ENCODE measurements at regions of chr14 and their contacts with region 1.

Region 1: DNA sequence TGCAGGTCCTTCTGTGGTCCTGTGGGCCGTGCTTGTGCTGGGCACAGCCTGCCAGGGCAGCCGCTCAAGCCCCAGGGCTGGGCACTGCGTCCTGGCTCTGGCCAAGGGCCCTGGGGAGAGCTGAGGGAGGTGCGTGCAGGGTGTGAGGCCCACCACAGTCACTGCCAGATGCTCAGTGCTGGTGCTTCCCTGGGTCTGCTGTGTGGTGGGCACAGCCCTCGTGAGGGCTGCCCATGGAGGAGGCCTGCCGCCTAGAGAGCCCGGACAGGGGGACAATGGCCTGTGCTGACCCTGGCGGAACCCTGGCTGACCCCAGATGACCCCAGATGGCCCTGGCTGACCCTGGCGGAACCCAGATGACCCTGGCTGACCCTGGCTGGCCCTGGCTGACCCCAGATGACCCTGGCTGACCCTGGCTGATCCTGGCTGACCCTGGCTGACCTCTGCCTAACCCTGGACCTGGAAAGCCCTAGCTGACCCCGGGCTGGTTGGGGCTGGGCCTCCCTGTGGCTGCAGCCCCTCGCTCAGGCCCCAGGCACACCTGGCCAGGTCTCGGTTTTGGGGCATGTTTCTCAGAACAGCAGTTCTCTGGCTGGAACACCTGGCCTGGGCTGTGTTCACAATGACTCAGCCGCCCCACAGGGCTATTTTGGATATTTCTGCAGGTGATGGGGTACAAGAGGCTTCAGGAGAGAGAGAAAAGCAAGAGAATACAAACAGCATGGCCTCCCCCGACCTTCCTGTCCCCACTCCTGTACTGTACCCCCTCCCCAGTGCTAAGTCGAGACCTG is 55.4 kb downstream of the TMEM121 start:
- DNase-seq: peak in 1 of 5 donors; percentile 21
- ATAC-seq: no peak
- H3K4me3 ChIP-seq: no peak overlapping the region
- H3K27ac ChIP-seq: no peak overlapping the region
- H3K4me1 ChIP-seq: no peaks in the 10 kb centered on the region
- H3K27me3 ChIP-seq: no peaks in the 10 kb centered on the region
- CTCF ChIP-seq: no peak
- POLR2A ChIP-seq: no peak

Region 2: GRCh38 chr14:105700622-105701288 is 119.0 kb after region 1 on chr14:
- intact Hi-C with region 1: loop called in 4 of 10 experiments (anchors 2 to 5 kb)
- DNase-seq: peak in 1 of 5 donors; percentile 6
- ATAC-seq: no peak
- H3K4me3 ChIP-seq: no peak overlapping the region
- H3K27ac ChIP-seq: no peak overlapping the region
- H3K4me1 ChIP-seq: no peaks in the 10 kb centered on the region
- H3K27me3 ChIP-seq: no peaks in the 10 kb centered on the region
- CTCF ChIP-seq: no peak
- POLR2A ChIP-seq: no peak

Region 3: GRCh38 chr14:106318700-106319099 is 737.0 kb after region 1 on chr14:
- intact Hi-C with region 1: no loop called
- DNase-seq: no peak
- ATAC-seq: no peak
- H3K4me3 ChIP-seq: no peak overlapping the region
- H3K27ac ChIP-seq: no peak overlapping the region
- H3K4me1 ChIP-seq: no peaks in the 10 kb centered on the region
- H3K27me3 ChIP-seq: peaks cover 0 to 19% (median 0%) of the 10 kb centered on the region in 9 donors
- CTCF ChIP-seq: peak in 1 of 12 donors; percentile 30
- POLR2A ChIP-seq: no peak

Measured in heart left ventricle (tissue), 16 donors.